HEK293T (cell line): ENCODE measurements at regions of chr9 and their contacts with region 1.

Region 1: DNA sequence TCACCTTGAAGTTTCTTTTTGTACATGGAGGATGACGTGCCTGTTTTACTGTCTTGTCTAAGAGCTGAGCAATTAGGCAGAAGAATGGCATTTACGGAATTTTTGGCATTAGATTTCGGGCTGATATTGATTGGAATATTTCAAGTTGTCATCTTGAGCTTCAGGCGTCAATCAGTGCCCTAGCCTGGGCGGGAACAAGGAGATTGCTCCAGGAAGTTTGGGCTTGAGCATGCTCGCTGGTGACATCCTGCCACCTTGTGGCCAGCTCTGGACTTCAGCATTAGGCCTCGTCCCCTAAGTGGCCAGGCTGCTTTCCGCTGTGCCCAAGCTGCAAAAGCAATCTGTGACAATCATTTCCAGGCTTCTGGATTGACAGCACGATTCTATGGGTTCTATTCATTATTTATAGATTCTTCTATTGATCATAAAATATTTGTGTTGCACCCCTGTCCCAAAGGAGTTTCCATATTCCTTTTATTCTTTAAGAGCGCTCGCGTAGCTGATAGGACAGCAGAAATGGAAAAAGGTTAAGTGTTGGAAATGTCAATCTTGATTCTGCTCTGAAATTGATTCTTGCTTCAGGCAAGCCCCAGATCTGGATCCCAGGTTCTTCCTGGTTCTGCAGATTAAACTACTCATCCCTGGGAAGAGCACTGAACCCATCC is 79.3 kb downstream of the SLC28A3 start:
- DNase-seq: peak; percentile 84

Region 2: DNA sequence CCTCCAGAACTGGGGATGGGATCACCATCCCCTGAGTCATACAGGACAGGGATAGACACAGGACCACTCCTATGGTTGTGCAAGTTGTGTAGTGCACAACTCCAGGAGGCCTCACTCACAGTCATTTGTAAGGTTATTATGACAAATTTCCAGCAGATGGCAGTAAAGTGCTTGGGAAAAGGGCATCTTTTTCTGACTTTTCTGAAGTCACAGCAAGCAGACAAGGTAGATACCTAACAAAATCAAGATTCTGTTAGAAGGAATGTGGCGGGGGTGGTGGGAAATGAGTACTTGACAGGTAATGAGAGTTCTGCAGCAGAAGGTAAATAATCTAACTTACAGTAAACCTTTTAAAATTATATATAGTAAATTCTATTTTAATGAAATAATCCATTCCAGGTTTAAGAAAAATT is 323.3 kb before region 1 on chr9:
- CTCF ChIA-PET with region 1: interaction called, 10 read pairs
- POLR2A ChIA-PET with region 1: no interaction called
- DNase-seq: peak; percentile 64

Region 3: DNA sequence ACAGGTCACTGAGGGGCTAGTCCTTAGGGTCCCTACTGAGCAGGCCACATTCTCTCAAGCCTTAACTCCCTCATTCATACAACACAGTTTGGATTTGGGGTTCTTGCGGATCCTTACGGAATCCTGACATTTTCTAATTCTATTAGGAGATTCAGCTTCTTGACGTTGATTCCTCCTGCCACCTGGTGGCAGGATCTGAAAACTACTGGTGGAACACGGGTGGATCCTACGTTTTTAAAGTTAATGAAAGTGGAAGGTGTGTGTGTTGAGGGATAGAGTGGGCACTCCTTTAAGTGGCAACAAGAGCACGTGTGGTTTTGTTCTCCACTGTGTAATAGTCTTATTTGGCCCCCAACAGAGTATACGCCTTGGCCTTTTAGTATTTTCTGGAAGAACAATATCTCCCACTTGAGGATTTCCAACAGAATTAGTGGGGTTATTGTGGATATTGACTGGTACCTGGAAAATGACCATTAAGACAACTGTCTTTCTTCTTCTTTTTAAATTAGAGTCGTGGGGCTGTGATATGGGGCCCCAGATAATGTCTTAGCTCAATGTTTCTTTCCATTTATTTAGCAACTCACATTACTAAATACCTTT is 54.2 kb after region 1 on chr9:
- CTCF ChIA-PET with region 1: no interaction called
- POLR2A ChIA-PET with region 1: no interaction called
- DNase-seq: peak; percentile 64